ENCODE measurements at regions of chr19 and their contacts with region 1.

Region 1: GRCh38 chr19:41206926-41207750 is 11.9 kb upstream of the AXL start:
- H3K4me3 ChIP-seq: no peak overlapping the region
- H3K27ac ChIP-seq: no peak overlapping the region
- H3K4me1 ChIP-seq: no peaks in the 10 kb centered on the region
- CTCF ChIP-seq: no peak

Region 2: GRCh38 chr19:41112728-41113290 is 94.3 kb before region 1 on chr19:
- CTCF ChIA-PET with region 1: no interaction called
- POLR2A ChIA-PET with region 1: no interaction called
- H3K4me3 ChIP-seq: no peak overlapping the region
- H3K27ac ChIP-seq: no peak overlapping the region
- H3K4me1 ChIP-seq: no peaks in the 10 kb centered on the region
- CTCF ChIP-seq: no peak

Region 3: GRCh38 chr19:41226053-41226873 is 19.1 kb after region 1 on chr19:
- CTCF ChIA-PET with region 1: interaction called, 19 read pairs
- POLR2A ChIA-PET with region 1: interaction called, 3 read pairs
- H3K4me3 ChIP-seq: peak overlapping the region; percentile 33
- H3K27ac ChIP-seq: peak overlapping the region; percentile 38; the same call in 1 of the 2 replicates
- H3K4me1 ChIP-seq: peaks cover 3% of the 10 kb centered on the region; the same call in 1 of the 2 replicates
- CTCF ChIP-seq: peak; percentile 39; the same call in 1 of the 2 replicates

Region 4: GRCh38 chr19:41233748-41234240 is 26.7 kb after region 1 on chr19:
- CTCF ChIA-PET with region 1: interaction called, 16 read pairs
- POLR2A ChIA-PET with region 1: no interaction called
- H3K4me3 ChIP-seq: no peak overlapping the region
- H3K27ac ChIP-seq: no peak overlapping the region
- H3K4me1 ChIP-seq: no peaks in the 10 kb centered on the region
- CTCF ChIP-seq: no peak

Region 5: DNA sequence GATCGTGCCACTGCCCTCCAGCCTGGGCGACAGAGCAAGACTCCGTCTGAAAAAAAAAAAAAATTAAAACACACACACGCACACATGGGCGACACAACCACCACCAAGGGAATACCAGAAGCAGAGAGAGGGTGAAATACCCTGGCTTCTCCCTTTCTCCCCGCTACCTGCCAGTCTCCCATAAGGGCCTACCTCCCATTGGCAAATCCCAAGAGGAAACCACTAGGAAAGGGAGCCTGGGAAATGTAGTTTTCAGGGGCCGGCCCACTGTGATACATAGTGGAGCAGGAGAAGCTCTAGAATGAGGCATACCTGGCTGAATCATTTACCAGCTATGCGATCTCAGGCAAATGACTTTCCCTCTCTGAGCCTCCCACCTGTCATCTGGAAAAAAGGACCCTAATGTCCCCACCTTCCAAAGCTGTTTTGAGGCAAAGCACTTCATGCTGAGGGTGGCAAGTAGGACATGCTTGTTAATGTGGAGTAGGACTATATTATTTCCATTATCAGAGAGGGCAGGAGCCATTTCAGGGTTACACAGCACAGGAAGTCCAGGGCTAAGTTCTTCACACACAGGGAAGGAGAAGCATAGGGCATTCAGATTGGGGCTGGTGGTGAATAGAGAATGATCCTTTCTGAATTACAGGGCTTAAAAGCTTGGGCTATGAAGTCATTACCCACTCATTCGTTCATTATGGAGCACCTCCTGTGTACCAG is 42.7 kb after region 1 on chr19:
- CTCF ChIA-PET with region 1: interaction called, 15 read pairs
- POLR2A ChIA-PET with region 1: no interaction called
- H3K4me3 ChIP-seq: no peak overlapping the region
- H3K27ac ChIP-seq: no peak overlapping the region
- H3K4me1 ChIP-seq: no peaks in the 10 kb centered on the region
- CTCF ChIP-seq: no peak

Measured in HEK293 (cell line).